ENCODE measurements at regions of chr5 and their contacts with region 1.

Region 1: DNA sequence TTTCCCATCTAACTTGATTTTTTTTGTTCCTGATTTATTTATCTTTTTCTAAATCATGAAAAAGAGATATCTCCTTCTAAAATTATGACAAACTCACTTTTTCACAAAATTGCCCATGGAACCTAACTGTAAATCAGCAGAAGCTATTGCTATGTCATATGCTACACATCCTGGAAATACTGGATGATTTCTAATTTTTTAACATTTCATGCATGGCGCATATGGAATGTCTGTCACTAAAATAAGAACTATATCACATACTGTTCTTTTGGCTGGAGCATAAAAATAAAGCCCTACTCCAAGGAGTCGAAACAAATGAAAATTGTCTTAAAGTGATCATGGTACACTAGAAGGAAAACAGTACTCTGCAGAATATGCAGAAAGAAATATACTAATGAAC is 60.6 kb downstream of the CAMK4 start:
- DNase-seq: no peak
- ATAC-seq: no peak
- H3K4me3 ChIP-seq: no peak overlapping the region
- H3K4me3 Mint-ChIP-seq: peak overlapping the region in 2 of 10 donors; percentile 24 to 33
- H3K27ac ChIP-seq: no peak overlapping the region
- H3K27ac Mint-ChIP-seq: peak overlapping the region in 1 of 9 donors; percentile 32
- H3K4me1 ChIP-seq: peaks cover 3 to 27% of the 10 kb centered on the region in 2 donors
- H3K4me1 Mint-ChIP-seq: peaks cover 12 to 97% (median 93%) of the 10 kb centered on the region in 7 donors
- H3K27me3 ChIP-seq: no peaks in the 10 kb centered on the region
- H3K27me3 Mint-ChIP-seq: no peaks in the 10 kb centered on the region

Region 2: DNA sequence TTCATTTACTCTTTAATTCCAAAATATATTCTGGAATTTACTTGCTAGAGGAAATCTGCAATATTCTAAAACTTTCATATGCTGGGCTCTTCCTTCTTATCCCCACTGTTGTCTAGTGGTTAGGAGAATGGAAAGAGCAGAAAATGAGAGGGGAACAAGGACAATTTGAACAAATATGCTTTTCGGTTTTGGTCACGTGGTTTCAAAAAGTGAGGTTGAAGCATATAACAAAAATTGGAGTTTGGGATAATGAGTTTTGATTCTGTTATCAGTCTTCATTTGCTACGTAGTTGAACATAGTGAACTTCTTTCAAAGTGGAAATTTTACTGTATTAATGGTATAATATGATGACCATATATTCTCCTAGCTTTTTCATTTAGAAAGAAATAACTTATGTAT is 10.8 kb after region 1 on chr5:
- CTCF ChIA-PET with region 1: no interaction called
- POLR2A ChIA-PET with region 1: interaction called, 4 read pairs
- intact Hi-C with region 1: loop called in 1 of 2 experiments (anchors 1 kb)
- DNase-seq: no peak
- ATAC-seq: no peak
- H3K4me3 ChIP-seq: no peak overlapping the region
- H3K4me3 Mint-ChIP-seq: peak overlapping the region in 1 of 10 donors; percentile 19
- H3K27ac ChIP-seq: no peak overlapping the region
- H3K27ac Mint-ChIP-seq: peak overlapping the region in 3 of 9 donors; percentile 1 to 46 (median 25)
- H3K4me1 ChIP-seq: no peaks in the 10 kb centered on the region
- H3K4me1 Mint-ChIP-seq: peaks cover 11 to 59% (median 44%) of the 10 kb centered on the region in 7 donors
- H3K27me3 ChIP-seq: no peaks in the 10 kb centered on the region
- H3K27me3 Mint-ChIP-seq: no peaks in the 10 kb centered on the region

Region 3: GRCh38 chr5:111730659-111731382 is 446.0 kb after region 1 on chr5:
- CTCF ChIA-PET with region 1: no interaction called
- POLR2A ChIA-PET with region 1: no interaction called
- intact Hi-C with region 1: no loop called
- DNase-seq: no peak
- ATAC-seq: no peak
- H3K4me3 ChIP-seq: no peak overlapping the region
- H3K4me3 Mint-ChIP-seq: peak overlapping the region in 1 of 10 donors; percentile 51
- H3K27ac ChIP-seq: no peak overlapping the region
- H3K27ac Mint-ChIP-seq: peak overlapping the region in 3 of 9 donors; percentile 17 to 63 (median 49)
- H3K4me1 ChIP-seq: no peaks in the 10 kb centered on the region
- H3K4me1 Mint-ChIP-seq: peaks cover 0 to 32% (median 3%) of the 10 kb centered on the region in 7 donors
- H3K27me3 ChIP-seq: no peaks in the 10 kb centered on the region
- H3K27me3 Mint-ChIP-seq: peaks cover 0 to 4% (median 0%) of the 10 kb centered on the region in 5 donors